Thyroid gland (tissue), 4 donors: ENCODE measurements at regions of chr11 and their contacts with region 1.

Region 1: DNA sequence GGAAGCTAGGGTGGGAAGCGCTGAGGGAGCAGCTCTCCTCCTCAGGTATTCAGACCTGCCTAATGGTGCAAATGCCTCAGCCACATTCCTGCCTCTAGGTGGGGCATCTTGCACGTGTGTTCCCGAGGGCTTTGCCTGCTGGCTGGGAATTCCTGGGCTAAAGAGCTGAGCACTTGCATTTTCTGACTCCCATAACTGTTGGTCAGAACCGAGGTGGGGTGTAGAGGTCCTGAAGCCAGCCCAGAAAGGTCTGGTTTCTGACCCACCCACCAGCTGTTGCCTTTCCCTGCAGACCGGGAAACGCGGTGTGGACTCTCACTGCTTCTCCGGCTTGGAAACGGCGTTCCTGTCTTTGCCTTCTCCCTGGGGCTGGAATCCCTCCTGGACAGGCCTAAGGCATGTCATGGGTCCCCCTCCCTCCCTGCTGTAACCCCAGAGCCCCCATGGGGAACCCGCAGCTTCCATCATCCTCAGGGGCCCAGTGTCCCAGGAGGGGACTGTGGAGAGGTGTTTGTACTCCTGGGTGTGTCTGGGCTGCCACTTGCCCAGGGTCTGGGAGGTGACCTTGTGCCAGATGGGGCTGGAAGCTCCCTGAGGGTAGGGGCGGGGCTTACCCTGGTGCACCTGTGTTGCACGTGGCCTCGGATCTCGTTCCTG is 24.0 kb upstream of the SMIM38 start:
- DNase-seq: peak; percentile 92 to 95
- H3K4me3 ChIP-seq: no peak overlapping the region
- H3K27ac ChIP-seq: peak overlapping the region in 2 of 3 donors; percentile 54 to 75
- H3K4me1 ChIP-seq: peaks cover 5 to 14% of the 10 kb centered on the region in 2 donors
- H3K27me3 ChIP-seq: no peaks in the 10 kb centered on the region
- CTCF ChIP-seq: peak; percentile 60 to 98 (median 87)
- POLR2A ChIP-seq: no peak

Region 2: GRCh38 chr11:69000831-69001242 is 130.9 kb before region 1 on chr11:
- intact Hi-C with region 1: no loop called
- DNase-seq: peak in 1 of 2 donors; percentile 12
- H3K4me3 ChIP-seq: no peak overlapping the region
- H3K27ac ChIP-seq: peak overlapping the region; percentile 25 to 45 (median 32)
- H3K4me1 ChIP-seq: peaks cover 0 to 20% of the 10 kb centered on the region in 2 donors
- H3K27me3 ChIP-seq: no peaks in the 10 kb centered on the region
- CTCF ChIP-seq: peak in 4 of 6 experiments; percentile 15 to 38 (median 20)
- POLR2A ChIP-seq: no peak

Region 3: DNA sequence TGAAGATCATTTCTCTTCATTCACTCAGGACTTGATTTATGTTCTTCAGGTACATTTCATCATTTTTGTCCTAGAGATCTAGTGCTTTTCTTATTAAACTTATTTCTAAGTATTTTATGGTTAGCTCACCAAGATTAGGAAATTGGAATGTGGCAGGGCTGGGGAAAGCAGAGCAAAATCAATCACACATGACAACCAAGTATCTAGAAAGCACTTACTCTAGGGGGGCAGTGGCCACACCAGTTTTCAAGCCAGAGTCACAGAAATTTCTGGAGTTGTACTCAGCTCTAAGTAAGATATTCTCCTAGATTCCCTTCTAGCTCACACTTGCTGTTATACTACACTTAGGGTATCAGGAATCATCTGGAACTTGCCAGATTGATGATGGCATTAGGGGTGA is 128.8 kb after region 1 on chr11:
- intact Hi-C with region 1: loop called (anchors 10 kb)
- DNase-seq: peak; percentile 47 to 49
- H3K4me3 ChIP-seq: no peak overlapping the region
- H3K27ac ChIP-seq: peak overlapping the region in 1 of 3 donors; percentile 7
- H3K4me1 ChIP-seq: peaks cover 5 to 15% of the 10 kb centered on the region in 2 donors
- H3K27me3 ChIP-seq: no peaks in the 10 kb centered on the region
- CTCF ChIP-seq: no peak
- POLR2A ChIP-seq: no peak

Region 4: DNA sequence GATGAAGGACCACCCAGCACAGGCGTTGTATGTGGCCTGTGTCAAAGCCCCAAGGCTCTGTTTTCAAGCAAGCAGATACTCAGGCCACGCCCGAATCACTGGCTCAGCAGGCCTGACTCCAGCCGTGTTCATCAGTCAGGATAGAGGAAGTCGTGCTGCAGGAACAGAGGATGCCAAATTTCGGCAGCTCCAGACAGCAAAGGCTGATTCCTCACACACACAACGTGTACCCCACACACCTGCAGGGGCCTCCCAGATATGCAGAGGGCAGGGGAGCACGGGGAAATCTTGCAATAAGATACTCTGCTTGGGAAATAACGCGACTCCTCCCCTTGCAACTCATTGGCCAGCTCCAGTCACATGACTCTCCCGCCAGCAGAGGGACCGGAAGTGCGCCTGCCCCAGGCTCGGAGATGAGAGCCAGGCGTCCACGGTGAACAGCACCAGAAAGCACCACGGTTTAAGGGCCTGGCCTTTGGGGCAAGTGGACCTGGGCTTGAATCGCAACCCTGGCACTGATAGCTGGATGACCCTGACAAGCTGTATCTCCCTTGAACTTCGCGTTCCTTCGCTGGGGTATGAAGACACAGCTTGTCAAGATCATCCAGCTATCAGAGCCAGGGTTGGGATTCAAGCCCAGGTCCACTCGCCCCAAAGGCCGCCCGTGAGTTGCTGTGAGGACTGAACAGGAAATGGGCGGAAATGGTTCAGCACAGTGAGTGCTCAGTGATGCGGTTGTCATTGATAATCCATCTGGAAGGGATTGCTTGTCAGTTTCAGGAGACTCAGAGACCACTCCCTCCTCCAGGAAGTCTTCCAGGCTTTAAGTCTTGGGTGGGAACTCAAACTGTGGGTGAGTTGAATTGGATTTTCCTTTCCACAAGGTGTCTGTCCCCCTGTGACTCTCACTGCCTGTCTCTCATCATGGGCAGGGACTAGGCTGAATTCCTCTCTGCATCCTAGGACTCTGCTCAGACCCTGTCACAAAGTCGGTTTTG is 250.7 kb after region 1 on chr11:
- intact Hi-C with region 1: no loop called
- DNase-seq: no peak
- H3K4me3 ChIP-seq: no peak overlapping the region
- H3K27ac ChIP-seq: no peak overlapping the region
- H3K4me1 ChIP-seq: no peaks in the 10 kb centered on the region
- H3K27me3 ChIP-seq: no peaks in the 10 kb centered on the region
- CTCF ChIP-seq: no peak
- POLR2A ChIP-seq: no peak

Region 5: DNA sequence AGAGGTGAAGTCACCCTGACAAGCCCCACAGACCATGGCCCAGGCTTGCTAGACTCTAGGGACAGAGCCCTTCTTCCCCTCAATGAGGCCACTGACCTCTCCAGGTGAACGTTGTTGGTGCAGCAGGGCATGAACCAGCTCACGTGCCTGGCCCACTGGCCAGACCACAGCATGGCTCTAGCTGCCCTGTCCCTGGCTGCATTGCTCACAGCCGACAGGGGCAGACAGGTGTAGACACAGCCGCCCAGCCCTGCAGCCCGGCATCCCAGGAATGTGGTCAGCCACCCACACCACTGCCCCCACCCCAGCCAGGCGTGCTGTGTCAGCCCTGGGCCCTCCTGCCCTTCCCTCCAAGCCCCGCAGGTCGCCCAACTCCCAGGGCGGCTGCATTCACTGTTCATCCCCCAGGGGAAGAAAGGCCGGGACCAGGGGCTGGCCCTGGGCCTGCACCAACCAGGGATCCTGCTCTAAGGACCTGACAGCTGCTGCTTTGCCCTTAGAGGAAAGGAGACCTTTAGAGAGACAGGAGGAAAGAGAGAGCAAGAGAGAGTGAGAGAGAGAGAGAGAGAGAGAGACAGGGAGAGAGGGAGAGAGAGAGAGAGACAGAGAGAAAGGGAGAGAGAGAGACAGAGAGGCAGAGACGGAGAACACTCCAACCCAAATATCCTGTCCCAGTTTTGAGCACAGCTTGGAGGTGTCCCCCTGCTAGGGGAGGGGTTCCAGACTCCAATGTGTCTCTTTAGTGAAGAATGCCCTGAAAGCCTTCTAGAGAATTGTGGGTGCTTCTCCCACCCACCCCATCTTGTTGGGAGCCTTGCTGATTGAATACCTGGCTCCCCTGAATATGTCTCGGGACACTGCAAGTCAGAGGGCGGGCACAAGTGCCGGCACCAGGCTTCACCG is 305.5 kb after region 1 on chr11:
- intact Hi-C with region 1: loop called (anchors 10 kb)
- DNase-seq: peak; percentile 86 to 91
- H3K4me3 ChIP-seq: no peak overlapping the region
- H3K27ac ChIP-seq: peak overlapping the region in 2 of 3 donors; percentile 13 to 41
- H3K4me1 ChIP-seq: peaks cover 0 to 13% of the 10 kb centered on the region in 2 donors
- H3K27me3 ChIP-seq: no peaks in the 10 kb centered on the region
- CTCF ChIP-seq: peak in 4 of 6 experiments; percentile 18 to 78 (median 39)
- POLR2A ChIP-seq: no peak